ENCODE measurements at regions of chr1 and their contacts with region 1.

Region 1: DNA sequence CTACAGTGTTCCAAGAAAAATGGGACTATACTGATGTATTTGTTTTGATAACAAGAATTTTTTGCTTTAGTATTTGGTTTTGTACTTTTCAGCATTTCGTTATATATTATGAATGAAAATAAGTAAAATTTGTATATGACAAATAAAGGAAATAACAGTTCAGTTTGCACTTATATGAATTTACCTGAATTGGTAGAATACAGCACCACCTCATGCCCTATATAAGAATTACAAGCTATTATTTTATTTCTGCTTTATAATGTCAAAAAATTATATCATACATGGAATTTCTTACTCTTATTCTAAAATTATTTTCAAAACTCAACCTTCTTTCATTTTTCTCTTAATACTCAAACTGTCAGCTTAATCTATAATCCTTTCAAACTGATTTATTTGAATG is 14.6 kb downstream of the EFCAB7 start:
- DNase-seq: no peak
- H3K4me3 ChIP-seq: no peak overlapping the region
- H3K27ac ChIP-seq: no peak overlapping the region
- H3K4me1 ChIP-seq: no peaks in the 10 kb centered on the region
- H3K27me3 ChIP-seq: no peaks in the 10 kb centered on the region
- CTCF ChIP-seq: peak; percentile 77

Region 2: GRCh38 chr1:62841587-62842169 is 696.3 kb before region 1 on chr1:
- CTCF ChIA-PET with region 1: interaction called, 3 read pairs
- POLR2A ChIA-PET with region 1: no interaction called
- intact Hi-C with region 1: loop called (anchors 5 kb)
- DNase-seq: peak in 1 of 2 experiments; percentile 46
- H3K4me3 ChIP-seq: no peak overlapping the region
- H3K27ac ChIP-seq: no peak overlapping the region
- H3K4me1 ChIP-seq: no peaks in the 10 kb centered on the region
- H3K27me3 ChIP-seq: no peaks in the 10 kb centered on the region
- CTCF ChIP-seq: peak; percentile 83

Region 3: DNA sequence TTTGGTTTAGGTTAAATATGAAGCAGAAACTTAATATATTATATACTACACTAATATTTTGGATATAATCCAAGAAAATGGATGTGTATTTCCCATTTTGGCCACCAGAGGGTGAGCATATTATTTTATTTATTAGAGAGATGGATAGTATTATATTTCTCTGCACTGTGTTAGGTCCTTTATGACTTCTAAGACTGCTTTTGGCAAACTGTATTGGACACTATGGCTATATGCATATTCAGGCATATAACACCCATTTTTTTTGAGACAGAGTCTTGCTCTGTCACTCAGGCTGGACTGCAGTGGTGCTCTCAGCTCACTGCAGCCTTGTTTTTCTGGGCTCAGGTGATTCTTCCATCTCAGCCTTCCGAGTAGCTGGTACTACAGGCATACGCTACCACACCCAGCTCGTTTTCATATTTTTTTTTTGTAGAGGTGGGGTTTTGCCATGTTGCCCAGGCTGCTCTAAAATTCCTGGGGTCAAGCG is 37.4 kb after region 1 on chr1:
- CTCF ChIA-PET with region 1: no interaction called
- POLR2A ChIA-PET with region 1: no interaction called
- intact Hi-C with region 1: no loop called
- DNase-seq: peak in 1 of 2 experiments; percentile 50
- H3K4me3 ChIP-seq: no peak overlapping the region
- H3K27ac ChIP-seq: no peak overlapping the region
- H3K4me1 ChIP-seq: no peaks in the 10 kb centered on the region
- H3K27me3 ChIP-seq: no peaks in the 10 kb centered on the region
- CTCF ChIP-seq: peak; percentile 95

Region 4: DNA sequence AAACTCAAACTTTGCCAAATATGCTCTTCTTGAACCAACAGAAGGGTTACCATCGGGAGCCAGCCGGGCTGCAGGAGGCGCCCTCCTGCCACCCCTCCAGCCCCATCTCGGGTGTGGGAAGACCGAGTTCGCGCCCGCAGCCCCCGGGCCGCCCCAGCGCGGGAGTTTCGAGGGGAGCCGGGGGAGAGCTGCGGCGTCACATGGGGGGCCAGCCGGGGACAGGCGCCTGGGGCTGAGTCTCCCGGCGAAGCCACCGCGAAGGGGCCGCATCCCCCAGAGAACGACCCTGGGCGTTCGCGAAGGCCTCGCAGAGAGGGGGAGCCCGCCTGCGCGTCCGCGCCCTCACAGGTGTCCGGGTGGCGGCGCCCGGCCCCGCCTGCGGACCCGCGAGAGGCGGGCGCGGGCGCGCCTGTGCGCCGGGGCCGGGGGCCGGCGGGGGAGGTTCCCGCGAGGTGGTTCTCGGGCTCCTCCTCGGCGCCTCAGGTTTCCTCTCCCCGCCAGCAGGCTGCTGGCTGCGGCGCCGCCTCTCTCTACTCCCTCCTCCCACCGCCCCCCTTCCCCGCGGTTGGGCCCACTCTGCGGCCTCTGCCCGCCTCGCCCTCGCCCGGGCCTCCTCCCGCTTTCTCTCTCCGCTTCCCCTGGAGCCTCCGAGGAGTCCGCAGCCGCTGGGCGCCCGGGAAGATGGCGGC is 1206.7 kb after region 1 on chr1 and contains the start of gene RAVER2:
- CTCF ChIA-PET with region 1: interaction called, 12 read pairs
- POLR2A ChIA-PET with region 1: no interaction called
- intact Hi-C with region 1: no loop called
- DNase-seq: peak; percentile 55 to 90
- H3K4me3 ChIP-seq: peak within 1 kb of the TSS; percentile 85
- H3K27ac ChIP-seq: peak within 1 kb of the TSS; percentile 50
- H3K4me1 ChIP-seq: peaks cover 21% of the 10 kb centered on the region; the same call in 1 of the 2 replicates
- H3K27me3 ChIP-seq: no peaks in the 10 kb centered on the region
- CTCF ChIP-seq: peak; percentile 62; the same call in 1 of the 2 replicates
- total RNA-seq, gene RAVER2: 12.4 and 13.1 TPM in 2 replicates